Caco-2 (cell line): ENCODE measurements at regions of chr1 and their contacts with region 1.

Region 1: DNA sequence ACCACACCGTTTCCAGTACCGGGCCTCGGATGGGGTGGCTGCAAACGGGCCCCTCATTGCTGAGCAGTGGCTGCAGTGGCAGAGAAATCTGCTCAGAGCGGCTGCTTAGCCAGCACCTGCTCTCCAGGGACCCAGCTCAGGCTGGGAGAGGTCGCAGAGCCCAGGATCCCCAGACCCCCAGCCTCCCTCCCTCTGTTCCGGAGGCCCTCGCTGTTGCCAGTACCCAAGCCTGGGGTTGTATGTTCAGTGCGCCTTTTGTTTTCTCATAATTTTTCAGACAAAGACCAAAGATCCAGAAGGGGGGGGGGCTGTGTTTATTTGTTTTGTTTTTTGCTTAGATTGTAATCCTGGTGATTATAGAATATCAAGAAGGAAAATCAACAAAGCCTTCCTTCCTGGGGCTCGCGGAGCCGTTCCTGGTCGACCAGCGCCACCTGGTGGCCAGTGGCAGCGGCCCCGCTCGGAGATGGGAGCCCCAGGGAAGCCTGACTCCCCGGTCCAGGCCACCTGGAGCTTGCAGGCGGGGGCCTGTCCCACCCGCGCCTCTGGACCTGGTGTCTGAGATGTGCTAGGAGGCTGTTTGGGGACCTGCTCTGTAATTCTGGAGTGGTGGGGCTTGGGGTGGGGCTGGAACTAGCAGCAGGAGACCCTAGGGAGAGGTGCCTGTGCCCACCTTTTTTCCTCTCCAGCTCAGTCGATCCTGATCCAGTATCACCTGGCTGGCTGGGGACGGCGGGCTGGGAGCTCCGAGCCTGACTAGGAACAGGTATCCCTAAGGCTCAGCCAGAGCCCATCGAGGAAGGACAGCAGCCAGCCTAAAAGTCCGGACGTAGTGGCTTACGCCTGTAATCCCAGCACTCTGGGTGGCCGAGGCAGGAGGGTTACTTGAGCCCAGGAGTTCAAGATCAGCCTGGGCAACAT is 123.9 kb upstream of the VAMP3 start:
- DNase-seq: peak; percentile 56 to 78
- H3K4me3 ChIP-seq: no peak overlapping the region
- H3K4me3 Mint-ChIP-seq: no peak overlapping the region
- H3K27ac Mint-ChIP-seq: no peak overlapping the region
- H3K4me1 ChIP-seq: no peaks in the 10 kb centered on the region
- H3K4me1 Mint-ChIP-seq: no peaks in the 10 kb centered on the region
- H3K27me3 ChIP-seq: no peaks in the 10 kb centered on the region
- H3K27me3 Mint-ChIP-seq: no peaks in the 10 kb centered on the region
- CTCF ChIP-seq: peak; percentile 87 to 93

Region 2: DNA sequence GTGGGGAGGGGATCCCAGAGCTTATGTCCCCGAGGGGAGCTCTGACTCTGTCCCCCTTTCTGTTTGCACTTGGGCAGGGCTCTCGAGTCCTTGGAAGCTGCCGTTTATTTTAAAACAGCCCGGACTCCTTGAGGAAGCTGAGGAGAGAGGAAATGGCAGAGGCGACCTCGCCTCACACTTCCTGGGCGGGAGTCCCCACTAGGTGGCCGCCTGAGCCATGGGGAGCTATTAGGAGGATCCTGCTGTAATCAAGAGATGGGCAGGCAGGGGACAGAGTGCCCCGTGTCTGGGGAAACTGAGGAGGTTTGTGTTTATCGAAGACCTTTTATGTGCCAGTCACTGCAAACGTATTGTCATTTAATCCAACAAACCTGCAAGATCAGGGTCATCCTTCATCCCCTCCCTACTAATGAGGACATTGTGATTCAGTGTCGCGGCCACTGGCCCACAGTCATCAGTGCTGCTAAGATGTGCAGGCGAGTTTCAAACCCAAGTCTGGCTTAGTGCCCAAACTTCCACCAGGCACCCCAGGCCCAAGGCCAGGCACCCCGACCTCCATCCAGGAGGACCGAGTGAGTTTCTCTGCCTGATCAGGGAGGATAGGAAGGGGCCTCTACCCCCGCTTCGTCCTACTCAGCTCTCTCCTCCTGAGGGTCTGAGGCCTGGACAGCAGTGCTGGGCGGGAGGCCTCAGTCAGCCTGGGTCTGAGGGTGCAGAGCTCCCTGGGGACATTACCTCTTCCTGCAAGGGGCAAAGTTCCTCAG is 193.0 kb before region 1 on chr1:
- CTCF ChIA-PET with region 1: interaction called, 4 read pairs
- POLR2A ChIA-PET with region 1: no interaction called
- intact Hi-C with region 1: loop called (anchors 1 kb)
- DNase-seq: peak in 1 of 2 experiments; percentile 46
- H3K4me3 ChIP-seq: no peak overlapping the region
- H3K4me3 Mint-ChIP-seq: no peak overlapping the region
- H3K27ac Mint-ChIP-seq: no peak overlapping the region
- H3K4me1 ChIP-seq: no peaks in the 10 kb centered on the region
- H3K4me1 Mint-ChIP-seq: no peaks in the 10 kb centered on the region
- H3K27me3 ChIP-seq: no peaks in the 10 kb centered on the region
- H3K27me3 Mint-ChIP-seq: no peaks in the 10 kb centered on the region
- CTCF ChIP-seq: peak; percentile 49 to 62

Region 3: GRCh38 chr1:7745791-7746190 is 98.5 kb after region 1 on chr1:
- CTCF ChIA-PET with region 1: no interaction called
- POLR2A ChIA-PET with region 1: no interaction called
- intact Hi-C with region 1: no loop called
- DNase-seq: no peak
- H3K4me3 ChIP-seq: no peak overlapping the region
- H3K4me3 Mint-ChIP-seq: no peak overlapping the region
- H3K27ac Mint-ChIP-seq: no peak overlapping the region
- H3K4me1 ChIP-seq: no peaks in the 10 kb centered on the region
- H3K4me1 Mint-ChIP-seq: no peaks in the 10 kb centered on the region
- H3K27me3 ChIP-seq: no peaks in the 10 kb centered on the region
- H3K27me3 Mint-ChIP-seq: no peaks in the 10 kb centered on the region
- CTCF ChIP-seq: no peak